ENCODE measurements at regions of chr22 and their contacts with region 1.

Region 1: DNA sequence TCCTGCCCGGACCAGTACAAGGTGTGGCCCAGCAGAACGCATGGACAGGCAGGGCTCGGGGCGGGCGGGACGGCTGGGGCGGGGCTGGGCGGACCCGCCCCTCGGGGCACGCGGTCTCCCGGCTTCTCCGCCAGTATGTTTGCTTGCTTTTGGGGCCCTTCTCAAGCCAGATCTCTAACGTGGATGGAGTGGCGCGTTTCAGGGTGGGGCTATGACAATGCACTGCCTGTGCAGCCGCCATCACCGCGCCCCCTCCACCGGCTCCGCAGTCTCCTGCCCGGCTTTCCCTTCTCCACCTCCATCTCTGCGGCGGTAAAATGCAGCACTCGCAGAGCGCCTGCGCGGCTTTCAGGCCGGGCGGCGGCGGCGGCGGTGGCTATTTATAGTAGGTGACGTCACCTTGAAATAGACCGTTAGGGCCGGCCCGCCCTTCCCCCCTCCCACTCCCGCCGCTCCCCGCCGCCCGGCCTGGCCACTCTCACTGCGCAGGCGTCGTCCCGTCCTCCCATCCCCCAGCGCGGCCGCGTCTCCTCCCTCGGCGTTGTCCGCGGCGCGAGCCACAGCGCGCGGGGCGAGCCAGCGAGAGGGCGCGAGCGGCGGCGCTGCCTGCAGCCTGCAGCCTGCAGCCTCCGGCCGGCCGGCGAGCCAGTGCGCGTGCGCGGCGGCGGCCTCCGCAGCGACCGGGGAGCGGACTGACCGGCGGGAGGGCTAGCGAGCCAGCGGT is at the start of gene YWHAH:
- DNase-seq: peak; percentile 96
- H3K4me3 ChIP-seq: peak within 1 kb of the TSS; percentile 89
- H3K27ac ChIP-seq: peak within 1 kb of the TSS; percentile 98
- H3K4me1 ChIP-seq: peaks cover 9% of the 10 kb centered on the region
- H3K27me3 ChIP-seq: no peaks in the 10 kb centered on the region
- CTCF ChIP-seq: no peak
- total RNA-seq, gene YWHAH: 207 to 269 TPM

Region 2: DNA sequence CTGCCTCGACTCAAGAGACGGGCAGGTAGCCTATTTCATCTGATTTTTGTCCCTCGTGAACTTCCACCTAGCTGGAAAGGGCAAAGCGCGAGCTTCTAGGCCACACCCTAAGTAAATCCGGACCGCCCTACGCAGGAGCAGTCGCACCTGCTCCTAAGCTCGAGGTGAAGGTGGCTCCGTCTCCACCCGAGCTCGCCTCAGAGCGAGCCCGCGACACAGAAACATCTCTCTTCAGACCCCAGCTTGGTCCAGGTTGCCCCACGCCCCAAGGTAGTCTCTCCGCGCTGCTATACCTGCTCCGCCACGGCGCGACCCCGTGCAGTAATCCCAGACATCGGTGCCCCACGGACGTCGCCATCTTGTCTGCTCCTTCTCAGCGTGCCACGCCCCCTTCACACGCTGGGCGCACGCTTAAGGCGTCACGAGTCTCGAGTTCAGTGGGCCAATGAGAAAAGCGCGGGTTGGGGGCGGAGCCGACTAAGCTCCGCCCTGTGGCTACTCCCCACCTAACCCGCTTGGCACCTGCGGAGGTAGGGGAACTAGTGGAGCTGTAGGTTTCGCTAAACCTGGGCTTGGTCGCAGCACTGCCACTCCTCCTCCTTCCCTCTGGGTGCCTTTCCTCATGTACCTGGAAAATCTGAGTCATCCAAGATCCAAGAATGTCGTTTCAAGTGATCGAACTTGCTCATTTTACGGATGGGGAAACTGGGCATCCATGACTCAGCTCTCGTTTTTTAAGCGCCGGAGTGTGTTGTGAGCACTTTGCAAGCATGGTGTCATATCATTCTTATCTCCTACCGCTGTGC is 282.1 kb before region 1 on chr22 and contains the start of gene PISD:
- intact Hi-C with region 1: loop called (anchors 10 kb)
- DNase-seq: peak; percentile 98
- H3K4me3 ChIP-seq: peak within 1 kb of the TSS; percentile 82
- H3K27ac ChIP-seq: peak within 1 kb of the TSS; percentile 64
- H3K4me1 ChIP-seq: peaks cover 8% of the 10 kb centered on the region
- H3K27me3 ChIP-seq: no peaks in the 10 kb centered on the region
- CTCF ChIP-seq: no peak
- total RNA-seq, gene PISD: 30.8 to 48.1 TPM